HEK293 (cell line): ENCODE measurements at regions of chr4 and their contacts with region 1.

Region 1: DNA sequence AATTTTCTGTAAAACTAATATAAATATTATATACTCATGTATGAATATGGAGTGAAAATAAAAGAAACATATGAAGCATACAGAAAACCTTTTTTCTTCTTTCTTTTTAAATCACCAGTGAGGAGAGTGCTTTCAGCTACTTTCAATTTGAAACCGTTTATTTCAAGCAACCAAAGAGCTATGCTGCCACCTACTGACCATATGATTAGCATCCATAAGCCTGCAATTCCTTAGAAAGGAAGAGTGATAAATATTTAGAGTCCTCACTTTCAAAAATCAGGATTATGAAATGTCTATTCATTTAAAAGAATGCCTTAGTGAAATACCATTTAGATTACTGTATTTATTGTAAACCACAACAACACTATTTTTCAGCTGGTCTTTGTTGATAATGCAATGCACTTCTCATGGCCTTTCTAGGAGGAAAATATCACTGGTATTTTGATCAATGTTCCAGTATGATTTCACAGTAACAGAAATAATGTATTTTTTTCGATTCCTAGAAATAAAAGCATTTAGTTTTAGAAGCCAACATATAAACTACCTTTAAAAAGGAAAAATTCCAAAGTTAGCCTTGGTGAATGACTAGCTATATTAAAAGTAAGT is 667.6 kb downstream of the PCDH18 start:
- H3K4me3 ChIP-seq: no peak overlapping the region
- H3K27ac ChIP-seq: no peak overlapping the region
- H3K4me1 ChIP-seq: no peaks in the 10 kb centered on the region
- CTCF ChIP-seq: 0 out of 2 replicates have a peak, but pooled peaks have one; percentile 11

Region 2: DNA sequence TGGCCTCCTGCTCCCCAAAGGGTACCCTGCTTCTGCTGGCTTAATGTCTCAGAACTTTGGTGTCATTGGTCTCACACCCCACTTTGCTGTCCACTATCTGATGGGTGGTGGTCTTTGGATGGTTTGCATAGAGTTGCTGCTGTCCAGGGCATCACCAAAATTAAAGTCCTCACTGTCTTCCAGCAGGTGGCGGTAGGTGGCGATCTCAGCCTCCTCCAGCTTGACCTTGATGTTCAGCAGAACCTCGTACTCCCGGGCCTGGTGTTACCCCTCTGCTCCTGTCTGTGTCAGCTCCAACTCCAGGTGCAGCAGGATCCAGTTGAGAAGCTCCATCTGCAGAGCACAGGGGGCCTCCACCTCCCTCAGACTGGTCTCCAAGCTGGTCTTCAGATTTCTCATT is 1493.5 kb before region 1 on chr4:
- CTCF ChIA-PET with region 1: interaction called, 10 read pairs
- POLR2A ChIA-PET with region 1: no interaction called
- H3K4me3 ChIP-seq: no peak overlapping the region
- H3K27ac ChIP-seq: no peak overlapping the region
- H3K4me1 ChIP-seq: no peaks in the 10 kb centered on the region
- CTCF ChIP-seq: no peak

Region 3: GRCh38 chr4:136713140-136713539 is 151.5 kb before region 1 on chr4:
- CTCF ChIA-PET with region 1: interaction called, 13 read pairs
- POLR2A ChIA-PET with region 1: no interaction called
- H3K4me3 ChIP-seq: no peak overlapping the region
- H3K27ac ChIP-seq: no peak overlapping the region
- H3K4me1 ChIP-seq: no peaks in the 10 kb centered on the region
- CTCF ChIP-seq: no peak

Region 4: DNA sequence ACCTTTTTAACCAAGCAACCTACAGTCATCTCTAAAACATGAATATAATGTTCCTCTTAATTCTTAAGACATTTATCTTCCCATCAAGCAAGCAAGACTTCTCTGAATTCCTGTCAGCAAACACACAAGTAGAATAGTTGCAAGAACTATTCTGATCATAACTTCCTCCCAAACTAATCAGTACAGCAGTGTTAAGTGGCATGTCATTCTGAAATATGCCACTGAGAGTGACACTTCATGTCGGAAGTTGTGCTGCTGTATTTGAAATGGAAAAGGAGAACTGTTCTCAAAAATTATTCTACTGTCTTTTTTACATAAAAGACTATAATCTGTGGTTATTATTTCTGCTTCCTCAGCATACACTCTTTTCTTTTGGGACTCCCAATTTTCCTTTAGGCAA is 121.0 kb after region 1 on chr4:
- CTCF ChIA-PET with region 1: no interaction called
- POLR2A ChIA-PET with region 1: no interaction called
- H3K4me3 ChIP-seq: no peak overlapping the region
- H3K27ac ChIP-seq: no peak overlapping the region
- H3K4me1 ChIP-seq: no peaks in the 10 kb centered on the region
- CTCF ChIP-seq: no peak